IMR-90 (cell line): ENCODE measurements at regions of chr17 and their contacts with region 1.

Region 1: DNA sequence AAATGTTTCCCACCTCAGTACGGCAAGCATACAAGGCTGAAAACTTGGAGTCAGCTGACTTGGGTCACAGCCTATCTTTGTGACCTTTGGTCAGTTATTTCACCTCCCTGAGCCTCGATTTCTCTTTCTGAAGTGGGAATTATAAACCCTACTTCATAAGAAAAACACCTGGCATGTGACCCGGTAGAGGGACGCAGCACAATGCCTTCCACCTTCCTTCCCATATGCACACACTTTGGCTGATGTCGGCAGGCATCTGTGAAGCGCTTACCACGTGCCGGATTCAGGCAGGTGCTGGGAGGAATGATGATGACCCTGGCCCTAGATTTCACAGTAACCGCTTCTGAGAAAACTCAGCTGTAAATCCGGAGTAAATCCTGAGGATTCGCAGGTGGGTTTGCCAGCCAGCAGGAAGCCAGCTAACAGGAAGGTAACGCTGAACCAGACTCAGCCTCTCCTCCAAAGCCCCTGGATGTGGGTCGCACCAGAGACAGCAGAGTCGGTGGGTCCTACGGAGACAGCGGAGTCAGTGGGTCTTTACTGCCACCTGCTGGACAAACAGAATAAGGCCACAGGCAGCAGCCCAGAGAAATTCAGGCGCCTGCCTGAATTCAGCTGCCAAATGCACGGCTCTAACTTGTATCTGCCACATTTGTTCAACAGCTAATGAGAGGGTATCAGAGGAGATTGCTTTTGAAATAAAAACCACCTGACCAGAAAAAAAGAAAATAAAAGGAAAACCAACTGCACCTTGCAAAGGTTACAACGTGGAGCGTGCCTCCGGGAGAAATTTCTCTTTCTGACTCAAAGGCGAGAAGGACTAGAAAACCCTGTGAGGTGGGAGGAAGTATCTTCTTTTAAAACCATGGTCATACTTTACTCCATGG is 16.6 kb downstream of the COPRS start:
- DNase-seq: peak; percentile 77
- ATAC-seq: peak; percentile 94
- H3K4me3 ChIP-seq: no peak overlapping the region; the same call in 1 of the 2 replicates
- H3K27ac ChIP-seq: no peak overlapping the region; the same call in 1 of the 2 replicates
- H3K4me1 ChIP-seq: peaks cover 12% of the 10 kb centered on the region
- H3K27me3 ChIP-seq: no peaks in the 10 kb centered on the region
- CTCF ChIP-seq: peak; percentile 95
- POLR2A ChIP-seq: peak; percentile 61; the same call in 1 of the 2 replicates
- RAD21 ChIP-seq: peak; percentile 98

Region 2: GRCh38 chr17:31388770-31389661 is 453.4 kb before region 1 on chr17:
- CTCF ChIA-PET with region 1: interaction called, 3 read pairs
- POLR2A ChIA-PET with region 1: no interaction called
- dilution Hi-C with region 1: no loop called
- in situ Hi-C with region 1: no loop called
- intact Hi-C with region 1: loop called (anchors 1 kb)
- DNase-seq: no peak
- ATAC-seq: peak; percentile 58
- H3K4me3 ChIP-seq: no peak overlapping the region
- H3K27ac ChIP-seq: no peak overlapping the region
- H3K4me1 ChIP-seq: peaks cover 2% of the 10 kb centered on the region; the same call in 1 of the 2 replicates
- H3K27me3 ChIP-seq: peaks cover 37% of the 10 kb centered on the region
- CTCF ChIP-seq: peak; percentile 59
- POLR2A ChIP-seq: no peak
- RAD21 ChIP-seq: peak; percentile 57

Region 3: GRCh38 chr17:31448467-31449077 is 393.9 kb before region 1 on chr17:
- CTCF ChIA-PET with region 1: interaction called, 3 read pairs
- POLR2A ChIA-PET with region 1: no interaction called
- dilution Hi-C with region 1: no loop called
- in situ Hi-C with region 1: loop called (anchors 5 kb)
- intact Hi-C with region 1: no loop called
- DNase-seq: peak; percentile 62
- ATAC-seq: peak; percentile 72
- H3K4me3 ChIP-seq: no peak overlapping the region
- H3K27ac ChIP-seq: no peak overlapping the region
- H3K4me1 ChIP-seq: no peaks in the 10 kb centered on the region; the same call in 1 of the 2 replicates
- H3K27me3 ChIP-seq: peaks cover 2% of the 10 kb centered on the region; the same call in 1 of the 2 replicates
- CTCF ChIP-seq: no peak
- POLR2A ChIP-seq: no peak
- RAD21 ChIP-seq: no peak

Region 4: GRCh38 chr17:31533546-31534155 is 308.8 kb before region 1 on chr17:
- CTCF ChIA-PET with region 1: interaction called, 21 read pairs
- POLR2A ChIA-PET with region 1: no interaction called
- dilution Hi-C with region 1: no loop called
- in situ Hi-C with region 1: no loop called
- intact Hi-C with region 1: no loop called
- DNase-seq: peak; percentile 88
- ATAC-seq: peak; percentile 93
- H3K4me3 ChIP-seq: no peak overlapping the region
- H3K27ac ChIP-seq: no peak overlapping the region; the same call in 1 of the 2 replicates
- H3K4me1 ChIP-seq: peaks cover 13% of the 10 kb centered on the region
- H3K27me3 ChIP-seq: no peaks in the 10 kb centered on the region
- CTCF ChIP-seq: peak; percentile 56
- POLR2A ChIP-seq: no peak
- RAD21 ChIP-seq: peak; percentile 62

Region 5: DNA sequence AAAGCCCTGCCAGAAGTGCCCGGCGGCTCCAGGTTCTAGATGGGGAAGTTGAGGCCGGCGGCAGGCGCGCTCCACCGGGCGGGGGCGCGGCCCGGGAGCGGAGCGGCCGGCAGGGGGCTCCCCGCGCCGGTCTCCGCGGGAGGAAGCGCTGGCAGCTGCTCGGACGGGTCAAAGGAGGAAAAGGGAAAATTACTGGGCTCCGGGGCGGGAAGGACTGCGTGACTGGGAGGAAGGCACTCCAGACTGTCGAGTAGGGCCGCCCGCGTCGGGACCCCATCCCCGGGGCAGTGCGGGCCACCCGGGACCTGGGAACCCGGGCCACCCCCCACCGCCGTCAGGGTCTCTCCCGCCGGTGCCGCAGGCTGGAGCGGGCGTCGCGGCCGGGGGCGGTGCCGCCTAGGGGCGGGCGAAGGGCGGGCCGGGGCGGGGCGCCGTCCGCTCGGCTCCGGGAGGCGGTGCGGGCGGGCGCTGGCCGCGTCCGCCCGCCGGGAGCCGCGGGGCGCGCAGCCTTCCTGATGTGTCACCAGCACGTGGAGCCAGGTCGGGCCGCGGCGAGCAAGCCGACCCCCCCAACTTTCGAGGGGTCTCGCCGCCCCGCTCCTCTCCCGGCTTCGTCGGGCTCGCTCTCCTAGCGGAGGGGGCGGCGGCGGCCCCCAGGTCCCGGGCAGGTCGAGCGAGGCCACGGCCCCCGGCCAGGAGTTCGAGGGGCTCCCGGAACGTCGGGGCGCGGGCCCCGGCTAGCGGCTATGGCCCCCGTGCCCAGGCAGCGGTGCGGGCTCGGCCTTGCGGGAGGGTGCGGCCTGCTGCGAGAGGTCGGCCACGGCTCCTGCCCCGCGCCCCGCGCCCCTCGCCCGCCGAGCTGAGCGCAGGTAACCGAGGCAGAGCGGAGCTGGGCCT is 283.4 kb before region 1 on chr17:
- CTCF ChIA-PET with region 1: interaction called, 15 read pairs
- POLR2A ChIA-PET with region 1: no interaction called
- dilution Hi-C with region 1: no loop called
- in situ Hi-C with region 1: loop called (anchors 5 kb)
- intact Hi-C with region 1: loop called (anchors 1 kb)
- DNase-seq: peak; percentile 80
- ATAC-seq: peak; percentile 94
- H3K4me3 ChIP-seq: peak overlapping the region; percentile 70
- H3K27ac ChIP-seq: peak overlapping the region; percentile 87
- H3K4me1 ChIP-seq: peaks cover 17% of the 10 kb centered on the region
- H3K27me3 ChIP-seq: no peaks in the 10 kb centered on the region
- CTCF ChIP-seq: peak; percentile 98
- POLR2A ChIP-seq: peak; percentile 53; the same call in 1 of the 2 replicates
- RAD21 ChIP-seq: peak; percentile 90

Region 6: DNA sequence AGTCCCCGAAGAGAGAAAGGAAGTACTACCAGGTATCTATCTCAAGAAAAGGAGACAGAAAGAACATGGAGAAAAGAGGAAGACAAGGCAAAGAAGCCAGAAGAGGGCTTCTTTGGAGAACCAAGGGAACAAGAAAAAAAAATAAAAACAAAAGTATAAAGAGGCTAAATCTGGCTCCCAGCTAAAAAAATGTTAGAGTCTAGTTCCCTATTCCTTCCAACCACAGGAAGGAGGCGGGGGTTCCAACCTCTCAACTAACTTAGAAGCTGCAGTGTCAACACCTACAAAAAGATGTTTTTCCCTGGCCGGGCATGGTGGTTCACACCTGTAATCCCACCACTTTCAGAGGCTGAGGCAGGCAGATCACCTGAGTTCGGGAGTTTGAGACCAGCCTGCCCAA is 45.7 kb after region 1 on chr17:
- CTCF ChIA-PET with region 1: no interaction called
- POLR2A ChIA-PET with region 1: no interaction called
- dilution Hi-C with region 1: no loop called
- in situ Hi-C with region 1: no loop called
- intact Hi-C with region 1: no loop called
- DNase-seq: no peak
- ATAC-seq: no peak
- H3K4me3 ChIP-seq: no peak overlapping the region
- H3K27ac ChIP-seq: no peak overlapping the region
- H3K4me1 ChIP-seq: no peaks in the 10 kb centered on the region
- H3K27me3 ChIP-seq: no peaks in the 10 kb centered on the region
- CTCF ChIP-seq: no peak
- POLR2A ChIP-seq: no peak
- RAD21 ChIP-seq: no peak